ENCODE measurements at regions of chr3 and their contacts with region 1.

Region 1: GRCh38 chr3:46378426-46378942 is 7.7 kb downstream of the CCR5 start:
- H3K4me3 ChIP-seq: no peak overlapping the region
- H3K27ac ChIP-seq: no peak overlapping the region
- H3K4me1 ChIP-seq: no peaks in the 10 kb centered on the region
- CTCF ChIP-seq: no peak

Region 2: DNA sequence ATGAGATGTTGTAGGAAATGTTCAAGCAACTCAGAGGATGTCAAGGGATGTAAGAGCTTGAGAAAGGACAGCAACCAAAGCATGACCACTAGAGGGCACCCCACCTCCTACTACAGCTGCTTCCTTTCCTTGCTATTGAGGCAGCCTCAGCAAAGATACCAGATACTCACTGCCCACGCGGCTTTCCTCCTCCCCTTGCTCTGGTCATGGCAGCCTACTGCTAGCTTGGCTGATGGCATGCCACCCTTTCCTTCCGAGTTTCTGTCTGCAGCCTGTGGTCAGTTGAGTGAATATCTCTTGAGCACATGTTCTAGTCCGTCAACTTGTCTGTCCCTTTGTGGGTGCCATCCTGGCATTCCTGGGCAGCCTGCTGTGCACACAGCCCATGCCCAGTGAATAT is 439.6 kb before region 1 on chr3:
- CTCF ChIA-PET with region 1: interaction called, 16 read pairs
- POLR2A ChIA-PET with region 1: no interaction called
- H3K4me3 ChIP-seq: no peak overlapping the region
- H3K27ac ChIP-seq: no peak overlapping the region
- H3K4me1 ChIP-seq: no peaks in the 10 kb centered on the region
- CTCF ChIP-seq: 0 out of 2 replicates have a peak, but pooled peaks have one; percentile 20

Region 3: DNA sequence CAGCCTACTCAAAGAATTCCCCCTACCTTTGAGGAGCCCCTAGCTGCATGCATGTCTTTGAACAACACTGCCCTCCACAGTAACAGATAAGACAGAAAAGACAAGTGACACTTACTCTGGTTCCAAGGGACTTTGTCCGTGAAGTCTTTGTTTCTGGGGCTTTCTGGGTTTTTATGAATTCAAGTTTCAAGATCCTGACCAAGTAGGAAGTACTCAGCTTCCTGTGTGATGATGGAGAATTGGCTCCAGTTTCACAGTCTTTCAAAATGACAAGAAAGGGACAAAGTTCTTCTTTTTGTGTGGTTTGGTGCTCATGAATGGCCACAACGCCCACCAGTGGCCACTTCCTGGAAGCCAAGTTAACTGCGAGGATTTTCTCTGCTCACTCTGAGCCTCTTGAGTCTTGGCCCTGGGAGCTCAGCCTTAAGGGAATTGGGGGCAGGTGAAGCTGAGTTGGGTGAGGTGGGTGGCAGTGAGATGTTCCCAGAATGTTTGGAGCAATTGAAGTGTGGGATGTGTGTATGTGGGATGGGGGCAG is 170.2 kb before region 1 on chr3 and contains the start of gene CCR1:
- CTCF ChIA-PET with region 1: interaction called, 17 read pairs
- POLR2A ChIA-PET with region 1: no interaction called
- H3K4me3 ChIP-seq: no peak within 1 kb of the TSS
- H3K27ac ChIP-seq: no peak within 1 kb of the TSS
- H3K4me1 ChIP-seq: no peaks in the 10 kb centered on the region
- CTCF ChIP-seq: no peak

Region 4: DNA sequence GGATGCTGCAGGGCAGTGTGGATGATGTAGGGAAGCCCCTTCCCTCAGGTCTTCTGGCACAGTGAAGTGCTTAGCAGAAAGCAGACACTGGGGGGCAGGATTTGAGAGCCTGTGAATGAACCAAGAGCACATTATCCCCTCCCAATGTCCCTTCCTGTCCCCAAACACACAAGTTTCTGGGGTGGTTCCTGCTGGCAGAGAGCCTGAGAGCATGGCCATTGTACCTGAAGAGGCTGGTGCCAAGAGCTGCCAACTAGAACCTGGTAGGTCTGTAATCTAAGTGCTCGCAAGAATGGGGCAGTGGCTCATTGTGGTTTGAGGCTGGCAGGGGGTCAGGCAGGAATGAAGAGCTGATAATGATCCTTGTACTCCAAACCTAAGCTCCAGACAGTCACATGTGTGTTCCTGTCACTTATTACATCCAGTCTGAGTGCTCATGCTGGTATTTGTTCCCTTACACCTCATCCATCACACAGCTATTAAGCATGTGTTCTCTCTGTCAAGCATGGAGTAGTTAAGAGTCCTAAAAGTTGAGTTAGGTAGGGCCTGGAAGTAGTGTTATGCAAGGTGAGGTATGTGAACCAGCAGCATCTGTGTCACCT is 163.6 kb before region 1 on chr3:
- CTCF ChIA-PET with region 1: interaction called, 17 read pairs
- POLR2A ChIA-PET with region 1: no interaction called
- H3K4me3 ChIP-seq: no peak overlapping the region
- H3K27ac ChIP-seq: no peak overlapping the region
- H3K4me1 ChIP-seq: no peaks in the 10 kb centered on the region
- CTCF ChIP-seq: no peak

Region 5: DNA sequence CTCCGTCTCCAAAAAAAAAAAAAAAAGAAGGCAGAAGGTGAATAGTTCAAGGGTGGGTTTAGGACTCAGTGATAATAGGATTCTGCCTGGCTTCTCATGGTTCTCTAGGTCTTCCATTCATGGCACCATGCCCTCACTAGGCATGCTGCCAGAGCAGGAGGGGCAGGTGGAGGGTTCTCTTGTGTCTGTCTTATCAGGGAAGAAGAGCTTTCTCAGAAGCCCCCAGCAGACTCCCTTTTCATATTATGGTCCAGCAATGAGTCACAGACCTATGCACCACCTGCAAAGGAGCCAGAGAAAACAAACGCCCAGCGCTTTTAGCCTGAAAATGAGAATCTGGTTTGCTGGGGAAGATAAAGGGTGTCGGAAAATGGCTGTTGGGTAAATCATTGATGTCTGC is 21.6 kb before region 1 on chr3:
- CTCF ChIA-PET with region 1: no interaction called
- POLR2A ChIA-PET with region 1: no interaction called
- H3K4me3 ChIP-seq: no peak overlapping the region
- H3K27ac ChIP-seq: no peak overlapping the region
- H3K4me1 ChIP-seq: no peaks in the 10 kb centered on the region
- CTCF ChIP-seq: no peak

Region 6: DNA sequence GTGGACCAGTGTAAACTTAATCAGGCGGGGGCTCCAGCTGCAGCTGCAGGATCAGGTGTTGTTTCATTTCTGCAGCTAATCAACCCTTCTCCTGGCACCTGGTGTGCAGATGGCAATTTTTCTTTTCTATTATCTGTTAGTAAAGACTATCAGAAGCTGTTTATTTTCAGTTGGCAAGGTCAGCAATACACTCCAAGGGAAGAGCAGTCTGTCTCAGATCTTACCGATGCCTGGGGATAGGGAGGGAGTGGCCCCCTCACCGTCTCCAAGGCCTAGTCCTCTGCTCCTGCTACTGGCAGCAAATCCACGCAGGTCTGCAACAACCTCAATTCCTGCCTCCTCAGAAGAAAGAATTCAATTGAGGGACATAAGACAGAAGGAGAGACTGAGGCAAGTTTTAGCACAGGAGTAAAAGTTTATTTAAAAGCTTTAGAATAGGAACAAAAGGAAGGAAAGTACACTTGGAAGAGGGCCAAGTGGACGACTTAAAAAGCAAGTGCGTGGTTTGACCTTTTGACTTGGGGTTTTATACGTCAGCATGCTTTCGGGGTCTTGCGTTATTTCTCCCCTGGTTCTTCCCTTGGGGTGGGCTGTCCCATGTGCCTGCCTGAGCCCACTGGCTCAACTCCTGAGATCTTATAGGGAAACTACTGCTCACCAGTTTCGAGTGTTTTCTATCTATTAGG is 37.8 kb after region 1 on chr3:
- CTCF ChIA-PET with region 1: no interaction called
- POLR2A ChIA-PET with region 1: no interaction called
- H3K4me3 ChIP-seq: no peak overlapping the region
- H3K27ac ChIP-seq: no peak overlapping the region
- H3K4me1 ChIP-seq: no peaks in the 10 kb centered on the region
- CTCF ChIP-seq: no peak

Measured in HEK293 (cell line).